Posterior vena cava (tissue), 2 donors: ENCODE measurements at regions of chr9 and their contacts with region 1.

Region 1: DNA sequence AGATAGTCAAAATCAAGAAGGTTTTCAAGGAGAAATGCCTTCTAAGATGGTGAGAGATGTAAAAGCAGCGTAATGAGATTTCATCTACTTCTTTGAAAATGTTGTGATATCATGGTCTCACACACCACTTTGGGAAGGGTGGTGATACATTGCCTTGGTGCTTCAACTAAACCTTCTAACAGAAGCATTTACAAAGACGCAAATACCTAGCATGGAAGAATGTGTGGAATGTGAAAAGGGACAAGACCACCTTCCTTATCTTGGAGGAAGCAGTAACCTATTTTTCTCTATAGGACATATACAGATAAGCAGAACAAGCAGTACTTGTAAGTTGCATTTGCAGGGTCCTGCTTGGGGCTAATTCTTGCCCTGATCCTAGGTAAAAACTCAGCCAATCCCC is 38.8 kb downstream of the PCA3 start:
- DNase-seq: no peak

Region 2: GRCh38 chr9:76203373-76203772 is 599.7 kb before region 1 on chr9:
- intact Hi-C with region 1: loop called in 1 of 2 experiments (anchors 5 kb)
- DNase-seq: no peak